ENCODE measurements at regions of chr19 and their contacts with region 1.

Region 1: DNA sequence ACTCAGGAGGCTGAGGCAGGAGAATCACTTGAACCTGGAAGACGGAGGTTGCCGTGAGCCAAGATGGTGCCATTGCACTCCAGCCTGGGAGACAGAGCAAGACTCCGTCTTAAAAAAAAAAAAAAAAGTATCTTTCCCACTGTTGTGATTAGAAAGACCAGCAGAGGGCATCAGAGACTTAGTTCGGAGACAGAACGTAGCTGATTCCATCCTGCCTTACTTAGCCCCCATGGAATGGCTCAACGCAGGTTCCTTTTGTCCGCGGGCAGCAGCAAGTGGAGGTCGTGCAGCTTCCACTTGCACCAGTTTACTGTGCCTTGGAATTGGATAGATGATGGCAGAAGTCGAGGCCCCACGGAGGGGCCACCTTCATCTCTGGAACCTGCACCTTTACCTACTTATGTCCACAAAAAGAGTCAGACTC is 8.1 kb downstream of the TIMM29 start:
- DNase-seq: peak; percentile 58
- ATAC-seq: peak; percentile 83
- H3K4me3 Mint-ChIP-seq: no peak overlapping the region
- H3K27ac Mint-ChIP-seq: no peak overlapping the region
- H3K4me1 Mint-ChIP-seq: peaks cover 15% of the 10 kb centered on the region
- H3K27me3 Mint-ChIP-seq: no peaks in the 10 kb centered on the region

Region 2: DNA sequence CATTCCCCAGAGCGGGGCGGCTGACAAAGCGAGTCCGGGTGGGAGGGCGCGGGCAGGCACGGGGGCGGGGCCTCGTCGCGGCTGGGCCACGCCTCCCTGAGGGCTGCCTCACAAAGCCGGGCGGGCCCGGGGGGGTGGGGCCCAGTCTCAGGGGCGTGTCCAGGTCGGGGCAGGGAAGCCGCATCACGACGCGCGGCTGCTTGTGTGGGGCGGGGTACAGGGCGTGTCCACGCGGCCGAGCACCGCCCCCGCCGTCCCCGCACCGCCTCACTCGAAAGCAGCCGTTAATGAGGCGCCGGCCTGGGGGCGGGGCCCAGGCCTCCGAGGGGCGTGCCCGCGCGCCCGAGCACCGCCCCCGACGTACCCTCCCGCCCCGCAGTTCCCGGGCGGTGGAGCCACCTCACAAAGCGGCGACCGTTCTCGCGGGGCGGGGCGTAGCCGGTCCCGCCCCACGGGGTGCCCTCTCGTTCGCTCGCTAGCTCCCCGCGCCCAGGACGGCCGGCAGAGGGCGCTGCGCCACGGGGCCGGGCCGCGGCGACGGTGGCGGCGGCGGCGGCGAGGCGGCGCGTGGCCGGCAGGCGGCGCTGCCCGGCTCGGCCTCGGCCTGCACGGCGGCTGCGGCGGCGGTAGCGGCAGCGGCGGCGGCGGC is 65.6 kb before region 1 on chr19 and contains the start of gene CARM1:
- CTCF ChIA-PET with region 1: interaction called, 13 read pairs
- POLR2A ChIA-PET with region 1: no interaction called
- DNase-seq: peak; percentile 99
- ATAC-seq: peak; percentile 91
- H3K4me3 Mint-ChIP-seq: peak within 1 kb of the TSS; percentile 67
- H3K27ac Mint-ChIP-seq: peak within 1 kb of the TSS; percentile 79
- H3K4me1 Mint-ChIP-seq: peaks cover 28% of the 10 kb centered on the region
- H3K27me3 Mint-ChIP-seq: no peaks in the 10 kb centered on the region
- total RNA-seq, gene CARM1: 33.2 to 33.4 TPM

Region 3: DNA sequence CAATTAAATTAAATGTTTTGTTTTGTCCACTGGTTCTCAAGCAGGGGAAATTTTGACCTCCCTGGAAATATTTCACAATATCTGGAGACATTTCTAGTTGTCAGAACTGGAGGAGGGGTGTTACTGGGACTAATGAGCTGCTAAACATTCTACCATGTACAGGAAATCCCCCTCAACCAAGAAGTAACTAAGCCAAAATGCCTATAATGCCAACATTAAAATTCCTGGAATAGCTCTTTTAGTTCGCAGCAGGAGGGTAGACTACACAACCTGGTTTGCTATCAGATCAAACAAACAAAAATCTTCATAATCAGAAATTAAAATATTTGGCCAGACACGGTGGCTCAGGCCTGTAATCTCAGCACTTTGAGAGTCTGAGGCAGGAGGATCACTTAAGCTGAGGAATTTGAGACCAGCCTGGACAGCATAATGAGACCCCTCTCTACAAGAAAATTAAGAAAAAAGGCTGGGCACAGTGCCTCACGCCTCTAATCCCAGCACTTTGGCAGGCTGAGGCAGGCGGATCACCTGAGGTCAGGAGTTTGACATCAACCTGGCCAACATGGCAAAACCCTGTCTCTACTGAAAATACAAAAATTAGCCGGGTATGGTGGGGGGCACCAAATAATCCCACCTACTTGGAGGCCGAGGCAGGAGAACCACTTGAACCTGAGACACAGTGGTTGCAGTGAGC is 10.4 kb after region 1 on chr19:
- CTCF ChIA-PET with region 1: interaction called, 13 read pairs
- POLR2A ChIA-PET with region 1: no interaction called
- DNase-seq: no peak
- ATAC-seq: no peak
- H3K4me3 Mint-ChIP-seq: no peak overlapping the region
- H3K27ac Mint-ChIP-seq: no peak overlapping the region
- H3K4me1 Mint-ChIP-seq: peaks cover 4% of the 10 kb centered on the region
- H3K27me3 Mint-ChIP-seq: no peaks in the 10 kb centered on the region

Region 4: DNA sequence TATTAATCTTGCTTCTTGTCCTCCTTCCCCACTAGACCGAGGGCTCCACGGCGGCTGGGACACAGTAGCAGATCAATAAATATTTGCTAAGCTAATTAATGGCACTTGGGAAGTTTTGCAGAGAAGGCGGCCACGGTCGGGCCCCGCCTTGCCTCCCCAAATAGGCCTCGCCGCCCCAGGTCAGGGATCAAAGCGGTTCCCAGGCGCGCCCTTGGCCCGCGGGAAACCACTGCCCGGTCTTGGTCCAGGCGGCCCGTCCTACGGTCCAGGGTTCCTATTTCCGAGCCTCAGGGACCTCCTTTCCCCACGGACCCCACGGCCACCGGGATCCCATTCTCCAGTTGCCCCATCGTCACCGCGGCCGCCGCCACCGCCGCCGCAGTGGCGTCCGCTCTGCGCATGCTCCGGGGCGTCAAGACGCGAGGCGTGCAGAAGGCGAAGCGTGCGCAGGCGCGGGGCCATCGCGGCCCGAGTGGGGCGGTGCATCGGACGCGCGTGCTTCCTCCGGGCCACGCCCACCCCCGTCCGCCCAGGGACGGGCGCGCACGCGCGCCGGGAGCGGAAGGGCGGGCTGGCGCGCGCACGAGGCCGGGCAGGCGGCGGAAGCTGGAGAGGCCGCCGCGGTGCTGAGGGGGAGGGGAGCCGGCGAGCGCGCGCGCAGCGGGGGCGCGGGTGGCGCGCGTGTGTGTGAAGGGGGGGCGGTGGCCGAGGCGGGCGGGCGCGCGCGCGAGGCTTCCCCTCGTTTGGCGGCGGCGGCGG is 23.8 kb after region 1 on chr19 and contains the start of gene SMARCA4:
- CTCF ChIA-PET with region 1: interaction called, 20 read pairs
- POLR2A ChIA-PET with region 1: interaction called, 3 read pairs
- DNase-seq: peak; percentile 97
- ATAC-seq: peak; percentile 86
- H3K4me3 Mint-ChIP-seq: peak within 1 kb of the TSS; percentile 92
- H3K27ac Mint-ChIP-seq: peak within 1 kb of the TSS; percentile 92
- H3K4me1 Mint-ChIP-seq: peaks cover 41% of the 10 kb centered on the region
- H3K27me3 Mint-ChIP-seq: no peaks in the 10 kb centered on the region
- total RNA-seq, gene SMARCA4: 108 to 115 TPM

Region 5: GRCh38 chr19:11011668-11012067 is 75.0 kb after region 1 on chr19:
- CTCF ChIA-PET with region 1: interaction called, 15 read pairs
- POLR2A ChIA-PET with region 1: no interaction called
- DNase-seq: no peak
- ATAC-seq: no peak
- H3K4me3 Mint-ChIP-seq: no peak overlapping the region
- H3K27ac Mint-ChIP-seq: no peak overlapping the region
- H3K4me1 Mint-ChIP-seq: no peaks in the 10 kb centered on the region
- H3K27me3 Mint-ChIP-seq: no peaks in the 10 kb centered on the region

Region 6: GRCh38 chr19:11035441-11036377 is 99.0 kb after region 1 on chr19:
- CTCF ChIA-PET with region 1: interaction called, 21 read pairs
- POLR2A ChIA-PET with region 1: no interaction called
- DNase-seq: peak; percentile 91
- ATAC-seq: peak; percentile 98
- H3K4me3 Mint-ChIP-seq: no peak overlapping the region
- H3K27ac Mint-ChIP-seq: peak overlapping the region; percentile 39
- H3K4me1 Mint-ChIP-seq: peaks cover 8% of the 10 kb centered on the region
- H3K27me3 Mint-ChIP-seq: no peaks in the 10 kb centered on the region

Region 7: GRCh38 chr19:11155373-11156120 is 218.9 kb after region 1 on chr19 and contains the start of gene SPC24:
- CTCF ChIA-PET with region 1: no interaction called
- POLR2A ChIA-PET with region 1: no interaction called
- DNase-seq: peak; percentile 97
- ATAC-seq: peak; percentile 99
- H3K4me3 Mint-ChIP-seq: peak within 1 kb of the TSS; percentile 85
- H3K27ac Mint-ChIP-seq: peak within 1 kb of the TSS; percentile 78
- H3K4me1 Mint-ChIP-seq: peaks cover 27% of the 10 kb centered on the region
- H3K27me3 Mint-ChIP-seq: no peaks in the 10 kb centered on the region
- total RNA-seq, gene SPC24: 92.6 to 94.0 TPM